Pancreas (tissue), 10 donors: ENCODE measurements at regions of chr15 and their contacts with region 1.

Region 1: DNA sequence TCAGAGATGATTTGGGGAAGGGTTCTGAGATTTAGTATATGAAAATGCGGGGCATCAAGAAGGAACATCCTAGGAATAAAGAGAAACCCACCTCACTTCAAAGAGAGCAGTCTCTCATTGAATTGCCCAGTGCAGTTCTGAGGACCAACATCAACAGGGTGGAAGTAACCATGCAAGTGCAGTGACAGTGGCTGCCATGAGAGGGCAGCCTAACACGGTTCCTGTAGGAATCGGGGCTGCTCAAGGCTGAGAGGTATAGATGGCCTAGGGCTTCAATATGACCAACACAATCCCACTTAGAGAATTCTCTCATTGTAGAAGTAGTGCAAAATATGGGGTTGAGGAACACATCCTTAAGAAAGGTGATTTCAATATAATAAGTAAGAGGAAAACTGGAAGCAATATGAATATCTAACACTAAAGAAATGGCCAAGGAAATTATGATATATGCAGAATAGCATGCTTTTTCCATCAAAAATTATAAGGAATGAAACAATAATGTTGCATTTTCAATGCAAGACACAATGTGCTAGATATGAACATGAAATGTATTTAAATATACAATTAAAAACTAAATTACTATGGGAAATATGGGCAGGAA is 51.1 kb upstream of the ARRDC4 start:
- DNase-seq: peak; percentile 34 to 89 (median 74)
- ATAC-seq: peak; percentile 82 to 100 (median 98)
- H3K4me3 ChIP-seq: no peak overlapping the region
- H3K27ac ChIP-seq: no peak overlapping the region
- H3K4me1 ChIP-seq: no peaks in the 10 kb centered on the region
- H3K27me3 ChIP-seq: peaks cover 0 to 5% (median 0%) of the 10 kb centered on the region in 4 donors
- CTCF ChIP-seq: peak; percentile 78 to 94 (median 88)

Region 2: GRCh38 chr15:97804955-97805354 is 104.4 kb before region 1 on chr15:
- intact Hi-C with region 1: no loop called
- DNase-seq: no peak
- ATAC-seq: no peak
- H3K4me3 ChIP-seq: no peak overlapping the region
- H3K27ac ChIP-seq: no peak overlapping the region
- H3K4me1 ChIP-seq: no peaks in the 10 kb centered on the region
- H3K27me3 ChIP-seq: no peaks in the 10 kb centered on the region
- CTCF ChIP-seq: no peak

Region 3: GRCh38 chr15:97995881-97996603 is 86.7 kb after region 1 on chr15:
- intact Hi-C with region 1: no loop called
- DNase-seq: no peak
- ATAC-seq: peak in 3 of 4 donors; percentile 58 to 69 (median 65)
- H3K4me3 ChIP-seq: no peak overlapping the region
- H3K27ac ChIP-seq: peak overlapping the region in 3 of 4 donors; percentile 18 to 65 (median 46)
- H3K4me1 ChIP-seq: peaks cover 13 to 33% (median 28%) of the 10 kb centered on the region in 3 donors
- H3K27me3 ChIP-seq: no peaks in the 10 kb centered on the region
- CTCF ChIP-seq: peak in 1 of 4 donors; percentile 12

Region 4: DNA sequence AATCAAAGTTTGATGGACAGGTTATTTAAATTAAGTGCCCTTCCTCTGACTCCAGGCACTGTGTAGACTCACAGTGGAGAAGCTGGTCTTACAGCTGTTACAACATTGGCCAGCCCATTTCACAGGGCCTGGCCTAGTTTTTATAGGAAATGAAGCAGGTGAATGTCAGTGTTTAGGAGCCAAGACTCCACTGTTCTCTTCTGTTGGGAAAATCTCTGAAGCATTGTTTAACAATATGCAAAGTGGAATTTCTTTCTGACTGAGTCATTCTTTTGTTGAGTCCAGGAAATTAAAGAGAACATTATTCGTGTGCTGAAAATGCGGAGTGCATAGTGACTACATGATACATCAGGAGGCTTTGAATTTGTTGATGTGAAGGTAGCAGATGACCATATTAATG is 115.8 kb after region 1 on chr15:
- intact Hi-C with region 1: no loop called
- DNase-seq: no peak
- ATAC-seq: peak in 2 of 4 donors; percentile 58 to 74
- H3K4me3 ChIP-seq: no peak overlapping the region
- H3K27ac ChIP-seq: no peak overlapping the region
- H3K4me1 ChIP-seq: no peaks in the 10 kb centered on the region
- H3K27me3 ChIP-seq: no peaks in the 10 kb centered on the region
- CTCF ChIP-seq: no peak

Region 5: GRCh38 chr15:98035577-98036010 is 126.2 kb after region 1 on chr15:
- intact Hi-C with region 1: no loop called
- DNase-seq: no peak
- ATAC-seq: no peak
- H3K4me3 ChIP-seq: no peak overlapping the region
- H3K27ac ChIP-seq: no peak overlapping the region
- H3K4me1 ChIP-seq: no peaks in the 10 kb centered on the region
- H3K27me3 ChIP-seq: no peaks in the 10 kb centered on the region
- CTCF ChIP-seq: no peak

Region 6: DNA sequence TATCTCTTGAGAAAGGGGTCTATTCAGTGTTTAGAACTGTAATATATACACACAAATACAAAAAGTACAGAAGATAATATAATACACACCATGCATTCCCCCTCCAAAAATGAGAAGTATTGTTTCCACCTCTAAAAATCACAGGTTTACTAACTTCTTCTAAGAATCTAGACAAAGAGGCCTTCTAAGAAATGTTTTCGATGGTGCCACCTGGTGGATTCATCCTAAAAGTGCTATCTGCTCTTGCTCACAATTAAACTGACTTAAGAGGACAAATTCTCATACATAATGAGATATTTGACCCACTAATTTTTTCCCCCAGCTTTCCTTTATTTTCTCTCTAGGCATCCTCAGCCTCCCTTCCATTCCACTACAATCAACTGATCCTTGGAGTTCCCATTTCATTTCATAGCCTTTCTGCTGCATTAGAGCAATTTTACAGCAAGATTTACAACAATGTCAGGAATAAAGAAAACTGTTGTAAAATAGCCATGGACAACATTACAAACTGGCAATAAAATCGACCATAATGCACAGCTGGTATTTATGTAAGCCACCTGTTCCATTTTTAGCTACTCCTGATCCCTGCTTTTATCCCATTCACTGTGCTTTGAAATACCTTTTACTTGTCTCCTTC is 175.7 kb after region 1 on chr15:
- intact Hi-C with region 1: loop called (anchors 5 to 10 kb)
- DNase-seq: peak in 3 of 6 donors; percentile 23 to 57 (median 33)
- ATAC-seq: peak in 3 of 4 donors; percentile 51 to 63 (median 62)
- H3K4me3 ChIP-seq: no peak overlapping the region
- H3K27ac ChIP-seq: no peak overlapping the region
- H3K4me1 ChIP-seq: no peaks in the 10 kb centered on the region
- H3K27me3 ChIP-seq: no peaks in the 10 kb centered on the region
- CTCF ChIP-seq: peak; percentile 19 to 60 (median 46)

Region 7: DNA sequence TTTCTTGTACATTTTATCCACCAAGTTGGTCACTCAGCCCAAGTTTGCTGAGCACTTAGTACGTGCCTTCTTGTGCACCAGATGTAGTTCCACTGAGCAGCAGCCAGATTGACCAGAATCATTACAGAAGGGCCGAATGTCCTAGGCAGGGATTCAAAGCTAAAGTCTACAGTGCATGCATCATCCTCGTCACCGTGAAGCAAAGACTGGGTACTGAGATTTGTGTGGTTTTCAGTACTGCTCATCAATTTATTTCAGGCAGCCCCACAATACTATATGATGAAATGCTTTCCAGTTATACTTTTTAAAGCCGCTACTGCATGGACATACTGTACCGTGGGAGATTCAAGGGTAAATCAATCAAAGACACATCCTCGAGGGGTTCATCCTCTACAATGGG is 278.2 kb after region 1 on chr15:
- intact Hi-C with region 1: loop called in 1 of 3 experiments (anchors 10 kb)
- DNase-seq: no peak
- ATAC-seq: no peak
- H3K4me3 ChIP-seq: no peak overlapping the region
- H3K27ac ChIP-seq: no peak overlapping the region
- H3K4me1 ChIP-seq: no peaks in the 10 kb centered on the region
- H3K27me3 ChIP-seq: peaks cover 0 to 4% (median 0%) of the 10 kb centered on the region in 4 donors
- CTCF ChIP-seq: no peak

Region 8: GRCh38 chr15:98292442-98293240 is 383.2 kb after region 1 on chr15:
- intact Hi-C with region 1: loop called in 2 of 3 experiments (anchors 10 kb)
- DNase-seq: peak in 5 of 6 donors; percentile 41 to 85 (median 45)
- ATAC-seq: peak; percentile 61 to 92 (median 70)
- H3K4me3 ChIP-seq: no peak overlapping the region
- H3K27ac ChIP-seq: no peak overlapping the region
- H3K4me1 ChIP-seq: no peaks in the 10 kb centered on the region
- H3K27me3 ChIP-seq: peaks cover 0 to 15% (median 0%) of the 10 kb centered on the region in 4 donors
- CTCF ChIP-seq: peak; percentile 21 to 62 (median 48)